Cardiac septum (tissue), 1 donor: ENCODE measurements at regions of chr1 and their contacts with region 1.

Region 1: GRCh38 chr1:156892190-156893047 is 1.1 kb upstream of the PEAR1 start:
- DNase-seq: peak; percentile 94

Region 2: GRCh38 chr1:156689035-156689952 is 203.1 kb before region 1 on chr1:
- intact Hi-C with region 1: loop called (anchors 10 kb)
- DNase-seq: peak; percentile 82

Region 3: GRCh38 chr1:156728597-156729462 is 163.6 kb before region 1 on chr1 and contains the start of gene ISG20L2:
- intact Hi-C with region 1: loop called (anchors 5 kb)
- DNase-seq: peak; percentile 98
- total RNA-seq, gene ISG20L2: 12.4 TPM

Region 4: GRCh38 chr1:156797212-156797871 is 95.1 kb before region 1 on chr1:
- intact Hi-C with region 1: loop called (anchors 5 kb)
- DNase-seq: no peak

Region 5: GRCh38 chr1:156838981-156839410 is 53.4 kb before region 1 on chr1:
- intact Hi-C with region 1: loop called (anchors 2 kb)
- DNase-seq: no peak

Region 6: GRCh38 chr1:156860113-156860627 is 32.2 kb before region 1 on chr1:
- intact Hi-C with region 1: loop called (anchors 2 kb)
- DNase-seq: no peak

Region 7: DNA sequence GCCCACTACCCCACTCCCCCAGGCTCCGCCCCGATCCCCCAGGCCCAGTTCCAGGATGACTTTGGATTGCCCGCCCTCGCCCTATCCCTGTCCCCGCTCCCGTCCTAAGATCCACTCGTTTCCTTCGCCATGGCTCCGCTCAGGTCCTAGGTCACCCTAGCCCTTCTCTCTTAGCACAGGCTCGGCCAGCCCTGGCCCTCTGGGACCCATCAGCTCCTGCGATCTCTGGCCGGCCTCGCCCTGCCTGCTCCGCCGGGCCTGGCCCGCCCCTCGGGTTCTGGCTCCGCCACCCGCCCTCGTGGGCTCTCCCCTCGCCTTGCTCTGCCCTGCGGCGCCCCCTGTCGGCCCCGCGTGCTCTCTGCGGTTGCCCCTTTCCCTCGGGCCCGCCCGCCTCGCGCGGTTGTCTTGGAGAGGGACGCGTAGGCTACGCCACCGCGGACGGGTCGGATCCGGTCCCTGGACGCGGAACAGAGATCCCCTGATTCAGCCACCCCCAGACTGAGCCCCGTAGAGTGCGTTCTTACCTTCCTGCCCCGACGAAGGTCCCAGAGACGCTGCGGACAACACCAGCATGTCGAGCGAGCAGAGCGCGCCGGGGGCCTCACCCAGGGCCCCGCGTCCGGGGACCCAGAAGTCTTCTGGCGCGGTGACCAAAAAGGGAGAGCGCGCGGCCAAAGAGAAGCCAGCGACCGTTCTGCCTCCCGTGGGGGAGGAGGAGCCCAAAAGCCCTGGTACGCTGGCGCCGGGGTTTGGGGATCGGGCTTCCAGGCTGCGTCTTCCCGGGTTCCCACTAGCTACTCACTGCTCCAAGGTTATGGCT is 28.0 kb after region 1 on chr1 and contains the start of gene LRRC71:
- intact Hi-C with region 1: loop called (anchors 2 kb)
- DNase-seq: peak; percentile 86
- total RNA-seq, gene LRRC71: not detected